Right ventricle myocardium inferior (tissue), 1 donor: ENCODE measurements at regions of chr2 and their contacts with region 1.

Region 1: GRCh38 chr2:121633463-121633862 is 15.8 kb downstream of the CLASP1 start:
- DNase-seq: no peak
- ATAC-seq: peak; percentile 73

Region 2: DNA sequence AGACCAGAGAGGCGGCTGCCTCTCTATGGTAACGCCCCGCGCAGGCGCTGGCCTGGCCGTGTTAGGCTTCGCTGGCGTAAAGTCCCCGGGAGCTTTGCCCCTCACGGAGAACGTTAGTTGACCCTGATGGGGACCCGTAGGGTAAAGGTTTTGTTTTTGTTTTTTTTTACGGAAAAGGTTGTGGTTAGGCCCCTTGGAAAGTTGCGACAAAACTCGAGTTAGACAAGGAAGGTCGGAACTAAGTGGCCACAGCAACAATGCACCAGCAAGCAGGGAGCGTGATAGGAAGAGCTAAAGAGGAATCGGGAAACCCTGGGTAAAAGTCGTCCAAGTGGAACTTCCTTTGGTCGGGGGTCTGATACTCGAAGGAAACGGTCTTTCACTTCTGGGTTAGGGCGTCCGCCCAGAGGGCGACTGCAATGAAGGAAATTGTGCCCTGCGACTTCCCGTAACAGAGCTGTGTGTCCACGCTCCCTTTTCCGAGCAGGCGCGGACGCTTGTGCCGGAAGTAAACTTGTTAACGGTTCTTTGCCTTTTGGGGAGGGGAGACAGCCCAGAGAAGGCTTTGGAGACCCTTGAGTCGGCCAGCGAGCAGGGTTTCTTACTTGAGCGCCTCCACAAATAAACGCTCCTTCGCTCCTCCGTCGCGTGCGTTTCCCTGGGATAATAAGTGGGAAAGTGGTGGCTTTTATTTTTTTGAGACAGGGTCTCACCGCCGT is 16.3 kb after region 1 on chr2:
- intact Hi-C with region 1: loop called (anchors 2 kb)
- DNase-seq: peak; percentile 98
- ATAC-seq: peak; percentile 99

Region 3: GRCh38 chr2:121764681-121765228 is 131.3 kb after region 1 on chr2:
- intact Hi-C with region 1: no loop called
- DNase-seq: no peak
- ATAC-seq: no peak